Right lobe of liver (tissue), 6 donors: ENCODE measurements at regions of chr20 and their contacts with region 1.

Region 1: GRCh38 chr20:4112481-4113421 is 97.4 kb upstream of the RNF24 start:
- DNase-seq: peak in 2 of 3 donors; percentile 53 to 61
- ATAC-seq: peak; percentile 10 to 68 (median 50)
- H3K4me3 ChIP-seq: no peak overlapping the region
- H3K27ac ChIP-seq: no peak overlapping the region
- H3K4me1 ChIP-seq: peaks cover 0 to 2% (median 0%) of the 10 kb centered on the region in 4 donors
- H3K27me3 ChIP-seq: no peaks in the 10 kb centered on the region
- CTCF ChIP-seq: no peak
- POLR2A ChIP-seq: no peak

Region 2: GRCh38 chr20:4160761-4161305 is 48.1 kb after region 1 on chr20:
- intact Hi-C with region 1: loop called in 1 of 2 experiments (anchors 5 kb)
- DNase-seq: peak in 1 of 3 donors; percentile 54
- ATAC-seq: peak; percentile 45 to 65 (median 51)
- H3K4me3 ChIP-seq: no peak overlapping the region
- H3K27ac ChIP-seq: no peak overlapping the region
- H3K4me1 ChIP-seq: no peaks in the 10 kb centered on the region
- H3K27me3 ChIP-seq: no peaks in the 10 kb centered on the region
- CTCF ChIP-seq: no peak
- POLR2A ChIP-seq: no peak

Region 3: DNA sequence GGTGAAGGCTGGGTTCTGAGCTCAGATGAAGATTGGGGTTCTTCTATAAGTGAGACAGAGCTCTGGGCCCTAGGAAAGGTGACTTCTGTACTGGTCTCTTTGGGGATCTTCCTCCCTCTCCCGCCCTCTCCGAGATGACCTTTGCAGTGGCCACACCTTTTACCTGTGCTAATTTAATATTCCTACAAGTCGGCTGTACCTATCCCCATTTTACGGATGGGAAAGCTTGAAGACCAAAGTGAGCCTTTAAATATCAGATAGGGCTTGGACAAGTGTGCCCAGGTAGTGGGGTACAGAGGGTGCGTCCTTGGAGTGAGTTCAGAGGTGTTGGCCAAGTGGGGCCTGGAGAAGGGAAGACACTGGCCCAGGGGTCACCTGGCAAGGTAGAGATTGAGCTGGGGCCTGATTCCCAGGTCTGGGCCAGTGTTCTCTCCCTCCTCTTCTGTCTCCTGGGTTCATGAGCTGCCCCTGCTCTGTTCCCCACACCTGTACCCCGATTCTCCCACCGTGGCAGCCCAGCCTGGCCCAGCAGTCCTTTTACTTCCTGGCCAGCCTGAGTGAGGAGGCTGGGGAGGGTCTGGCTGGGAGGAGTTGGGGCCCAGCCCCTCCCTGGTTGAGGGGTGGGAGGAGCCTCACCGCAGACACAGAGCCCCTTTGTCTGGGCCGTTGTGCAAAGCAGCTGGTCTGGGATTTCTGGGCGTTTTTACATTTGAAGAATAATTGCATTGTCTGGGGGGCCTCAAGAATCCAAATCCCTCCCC is 54.7 kb after region 1 on chr20:
- intact Hi-C with region 1: loop called (anchors 2 to 5 kb)
- DNase-seq: no peak
- ATAC-seq: no peak
- H3K4me3 ChIP-seq: no peak overlapping the region
- H3K27ac ChIP-seq: no peak overlapping the region
- H3K4me1 ChIP-seq: peaks cover 0 to 10% (median 3%) of the 10 kb centered on the region in 4 donors
- H3K27me3 ChIP-seq: no peaks in the 10 kb centered on the region
- CTCF ChIP-seq: no peak
- POLR2A ChIP-seq: no peak

Region 4: DNA sequence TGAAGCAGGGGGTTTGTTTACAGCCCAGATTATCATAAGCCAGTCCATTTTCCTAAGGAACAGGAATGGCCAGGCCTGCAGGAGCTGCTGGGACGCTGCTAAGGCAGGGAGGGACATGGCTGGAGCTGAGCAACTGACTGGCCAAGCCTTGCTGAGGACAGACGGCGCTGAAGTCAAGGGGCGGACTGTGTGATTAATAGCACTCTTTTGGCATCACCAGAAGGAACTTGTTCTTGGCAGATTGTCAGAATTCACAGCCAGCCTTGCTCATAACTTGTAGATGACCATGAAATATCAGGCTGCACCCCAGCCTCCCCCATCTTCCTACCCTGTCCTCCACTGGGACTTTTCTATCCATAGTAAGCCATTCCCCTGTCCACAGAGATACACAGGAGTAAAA is 121.4 kb after region 1 on chr20:
- intact Hi-C with region 1: no loop called
- DNase-seq: no peak
- ATAC-seq: no peak
- H3K4me3 ChIP-seq: no peak overlapping the region
- H3K27ac ChIP-seq: no peak overlapping the region
- H3K4me1 ChIP-seq: no peaks in the 10 kb centered on the region
- H3K27me3 ChIP-seq: no peaks in the 10 kb centered on the region
- CTCF ChIP-seq: no peak
- POLR2A ChIP-seq: no peak